ENCODE measurements at regions of chr10 and their contacts with region 1.

Region 1: DNA sequence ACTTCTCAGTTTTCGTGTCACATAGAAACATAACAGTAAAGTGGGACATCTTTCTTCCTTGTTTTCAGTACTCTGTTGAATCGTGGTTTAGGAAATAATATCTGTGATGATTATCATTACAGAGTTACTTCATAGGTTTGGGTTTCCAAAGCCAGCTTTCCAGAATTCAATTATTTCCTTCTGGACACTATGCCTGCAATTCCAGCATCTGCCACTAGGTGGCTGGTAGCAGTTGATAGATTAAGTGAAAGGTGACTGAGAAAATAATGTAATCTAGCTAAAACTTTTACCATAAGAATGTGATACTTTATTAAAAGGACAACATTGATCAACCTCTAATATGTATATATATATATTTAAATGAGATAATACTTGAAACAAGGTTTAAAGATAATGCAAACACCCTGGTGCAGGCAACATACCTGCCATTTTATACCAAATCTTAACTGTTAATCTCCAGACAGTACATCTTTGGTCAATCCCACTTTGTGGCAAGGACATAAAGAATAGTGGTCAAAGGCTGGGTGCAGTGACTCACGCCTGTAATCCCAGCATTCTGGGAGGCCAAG is 102.6 kb downstream of the SH3PXD2A start:
- DNase-seq: no peak
- H3K4me3 ChIP-seq: peak overlapping the region in 1 of 2 experiments; percentile 41; a peak in 1 of 4 replicates
- H3K27ac ChIP-seq: no peak overlapping the region
- H3K4me1 ChIP-seq: peaks cover 3 to 6% of the 10 kb centered on the region in 2 experiments; a peak in 2 of 4 replicates
- H3K27me3 ChIP-seq: no peaks in the 10 kb centered on the region
- CTCF ChIP-seq: peak; percentile 83
- EP300 ChIP-seq: no peak
- RAD21 ChIP-seq: no peak

Region 2: DNA sequence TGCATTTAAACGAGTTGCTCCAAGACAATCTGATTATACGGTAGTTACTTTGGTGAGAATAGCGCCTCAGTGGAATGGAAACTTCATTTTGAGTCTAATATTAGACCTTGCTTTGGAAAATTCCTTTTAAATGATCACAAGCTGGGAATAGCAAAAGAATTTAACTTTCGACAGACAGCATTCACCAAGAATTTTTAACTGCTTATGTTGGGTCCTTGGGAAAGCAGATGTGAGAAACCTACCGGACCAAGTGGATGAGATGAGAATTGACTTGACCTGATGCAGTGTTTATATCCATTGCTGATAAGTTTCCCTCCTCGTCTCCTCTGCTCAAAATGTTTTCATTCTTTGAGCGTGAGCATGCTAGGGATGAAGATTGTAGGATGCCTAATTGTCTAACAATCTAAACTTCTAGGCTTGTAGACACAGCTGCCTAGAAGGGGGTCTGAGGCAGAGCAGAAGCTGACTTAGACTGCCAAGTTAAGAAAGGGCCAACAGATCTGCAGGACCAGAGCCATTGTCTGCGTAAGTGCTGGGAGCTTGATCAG is 707.7 kb before region 1 on chr10:
- CTCF ChIA-PET with region 1: no interaction called
- POLR2A ChIA-PET with region 1: no interaction called
- DNase-seq: no peak
- H3K4me3 ChIP-seq: no peak overlapping the region
- H3K27ac ChIP-seq: no peak overlapping the region
- H3K4me1 ChIP-seq: no peaks in the 10 kb centered on the region
- H3K27me3 ChIP-seq: no peaks in the 10 kb centered on the region
- CTCF ChIP-seq: no peak
- EP300 ChIP-seq: no peak
- RAD21 ChIP-seq: no peak

Region 3: GRCh38 chr10:103720964-103721335 is 31.8 kb before region 1 on chr10:
- CTCF ChIA-PET with region 1: no interaction called
- POLR2A ChIA-PET with region 1: no interaction called
- DNase-seq: no peak
- H3K4me3 ChIP-seq: no peak overlapping the region
- H3K27ac ChIP-seq: peak overlapping the region in 1 of 2 experiments; percentile 93; a peak in 2 of 4 replicates
- H3K4me1 ChIP-seq: peaks cover 17 to 59% of the 10 kb centered on the region in 2 experiments; a peak in 2 of 4 replicates
- H3K27me3 ChIP-seq: no peaks in the 10 kb centered on the region
- CTCF ChIP-seq: no peak
- EP300 ChIP-seq: no peak
- RAD21 ChIP-seq: no peak

Region 4: GRCh38 chr10:103739039-103739764 is 13.6 kb before region 1 on chr10:
- CTCF ChIA-PET with region 1: interaction called, 25 read pairs
- POLR2A ChIA-PET with region 1: no interaction called
- DNase-seq: no peak
- H3K4me3 ChIP-seq: peak overlapping the region; percentile 9 to 40; a peak in 2 of 4 replicates
- H3K27ac ChIP-seq: peak overlapping the region; percentile 72 to 91
- H3K4me1 ChIP-seq: peaks cover 32 to 60% of the 10 kb centered on the region in 2 experiments; a peak in 3 of 4 replicates
- H3K27me3 ChIP-seq: no peaks in the 10 kb centered on the region
- CTCF ChIP-seq: no peak
- EP300 ChIP-seq: peak in 1 of 2 experiments; percentile 75; a peak in 2 of 4 replicates
- RAD21 ChIP-seq: no peak

Region 5: GRCh38 chr10:103763374-103764202 is 10.8 kb after region 1 on chr10:
- CTCF ChIA-PET with region 1: interaction called, 40 read pairs
- POLR2A ChIA-PET with region 1: no interaction called
- DNase-seq: no peak
- H3K4me3 ChIP-seq: no peak overlapping the region
- H3K27ac ChIP-seq: peak overlapping the region in 1 of 2 experiments; percentile 75; a peak in 2 of 4 replicates
- H3K4me1 ChIP-seq: peaks cover 45 to 67% of the 10 kb centered on the region in 2 experiments; a peak in 3 of 4 replicates
- H3K27me3 ChIP-seq: no peaks in the 10 kb centered on the region
- CTCF ChIP-seq: no peak
- EP300 ChIP-seq: no peak
- RAD21 ChIP-seq: no peak

Measured in SK-N-SH (cell line).